Heart right ventricle (tissue), 16 donors: ENCODE measurements at regions of chr11 and their contacts with region 1.

Region 1: DNA sequence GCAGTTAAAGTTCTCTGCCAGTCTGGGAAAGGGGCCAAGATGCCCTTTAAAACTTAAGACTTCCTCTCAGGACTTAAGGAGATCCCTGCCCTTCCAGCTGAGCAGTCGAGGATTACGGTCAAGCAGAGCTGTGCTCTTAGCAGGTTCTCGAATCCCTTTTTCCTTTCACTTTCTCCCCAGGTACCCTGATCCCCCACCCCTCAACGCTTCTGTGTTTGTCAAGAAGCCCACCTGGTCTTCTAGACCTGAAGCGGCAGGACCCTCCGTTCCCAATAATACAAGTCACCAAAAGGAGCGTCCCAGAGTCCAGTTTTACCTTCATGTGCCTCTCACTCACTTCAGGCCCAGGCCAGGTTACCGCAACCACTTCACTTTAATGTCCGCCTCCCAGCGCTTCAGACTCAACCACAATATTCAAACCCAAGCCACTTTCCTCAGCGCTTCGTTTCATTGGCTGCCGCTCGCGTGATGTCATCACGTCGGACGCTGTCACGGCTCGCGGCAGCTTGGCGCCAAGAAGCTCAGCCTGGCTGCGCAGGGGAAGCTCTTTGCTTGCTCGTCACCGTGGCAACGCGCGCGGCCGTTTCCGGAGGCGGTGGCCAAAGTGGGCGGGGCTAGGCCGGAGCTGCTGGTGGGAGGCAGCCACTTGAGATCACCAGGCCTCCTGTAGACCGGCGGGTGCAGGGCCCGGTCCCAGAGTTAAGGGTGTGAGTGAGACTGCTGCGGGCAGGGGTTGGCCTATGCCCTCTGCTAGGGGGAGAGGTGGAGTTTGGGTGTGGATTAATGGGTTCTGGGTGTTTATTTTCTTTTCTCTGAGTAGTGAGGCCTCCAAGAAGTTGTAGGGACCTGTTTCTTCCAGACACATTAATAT is at the starts of genes KIF18A and METTL15:
- DNase-seq: peak; percentile 100
- ATAC-seq: peak; percentile 99 to 100 (median 100)
- H3K4me3 ChIP-seq: peak within 1 kb of the TSS; percentile 36 to 74 (median 59)
- H3K27ac ChIP-seq: peak within 1 kb of the TSS in 9 of 10 donors; percentile 63 to 91 (median 80)
- H3K4me1 ChIP-seq: peaks cover 0 to 45% (median 37%) of the 10 kb centered on the region in 9 donors
- H3K27me3 ChIP-seq: no peaks in the 10 kb centered on the region
- CTCF ChIP-seq: no peak
- total RNA-seq, gene KIF18A: 0.06 to 1.3 (median 0.17) TPM in 9 of 10 donors, not detected in the other
- total RNA-seq, gene METTL15: 8.9 to 13.6 (median 11.9) TPM

Region 2: DNA sequence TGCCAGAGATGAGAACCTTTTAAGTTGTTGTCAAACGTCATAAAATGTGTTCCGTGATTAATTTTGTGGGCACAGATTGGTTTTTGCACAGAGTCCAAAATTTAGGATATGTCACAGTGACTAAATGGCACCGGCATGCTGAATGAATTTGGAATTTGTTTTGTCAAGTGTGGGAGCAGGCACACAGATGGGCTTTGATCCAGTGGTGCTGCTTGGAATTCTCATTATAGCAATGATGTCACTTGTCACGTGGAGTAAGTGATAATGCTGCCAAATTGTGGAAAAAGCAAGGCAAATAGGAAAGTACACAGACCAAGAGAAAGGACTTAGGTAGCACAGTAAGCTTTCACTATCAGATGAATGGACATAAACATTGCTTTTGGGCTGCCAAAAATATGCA is 593.4 kb before region 1 on chr11:
- intact Hi-C with region 1: loop called in 1 of 10 experiments (anchors 10 kb)
- DNase-seq: peak in 1 of 2 donors; percentile 60
- ATAC-seq: peak; percentile 76 to 91 (median 90)
- H3K4me3 ChIP-seq: no peak overlapping the region
- H3K27ac ChIP-seq: peak overlapping the region; percentile 50 to 80 (median 69)
- H3K4me1 ChIP-seq: peaks cover 0 to 44% (median 10%) of the 10 kb centered on the region in 9 donors
- H3K27me3 ChIP-seq: no peaks in the 10 kb centered on the region
- CTCF ChIP-seq: no peak

Region 3: GRCh38 chr11:27705873-27706820 is 401.8 kb before region 1 on chr11:
- intact Hi-C with region 1: loop called in 2 of 10 experiments (anchors 5 to 10 kb)
- DNase-seq: no peak
- ATAC-seq: no peak
- H3K4me3 ChIP-seq: no peak overlapping the region
- H3K27ac ChIP-seq: no peak overlapping the region
- H3K4me1 ChIP-seq: peaks cover 0 to 9% (median 7%) of the 10 kb centered on the region in 9 donors
- H3K27me3 ChIP-seq: peaks cover 0 to 46% (median 24%) of the 10 kb centered on the region in 7 donors
- CTCF ChIP-seq: peak; percentile 31 to 72 (median 60)

Region 4: GRCh38 chr11:27874998-27875830 is 232.8 kb before region 1 on chr11:
- intact Hi-C with region 1: loop called in 1 of 10 experiments (anchors 10 kb)
- DNase-seq: no peak
- ATAC-seq: peak in 4 of 8 donors; percentile 34 to 59 (median 40)
- H3K4me3 ChIP-seq: no peak overlapping the region
- H3K27ac ChIP-seq: no peak overlapping the region
- H3K4me1 ChIP-seq: peaks cover 0 to 11% (median 0%) of the 10 kb centered on the region in 9 donors
- H3K27me3 ChIP-seq: no peaks in the 10 kb centered on the region
- CTCF ChIP-seq: no peak

Region 5: GRCh38 chr11:28146123-28146751 is 38.3 kb after region 1 on chr11:
- intact Hi-C with region 1: no loop called
- DNase-seq: no peak
- ATAC-seq: peak in 1 of 8 donors; percentile 50
- H3K4me3 ChIP-seq: no peak overlapping the region
- H3K27ac ChIP-seq: no peak overlapping the region
- H3K4me1 ChIP-seq: peaks cover 0 to 4% (median 0%) of the 10 kb centered on the region in 9 donors
- H3K27me3 ChIP-seq: no peaks in the 10 kb centered on the region
- CTCF ChIP-seq: no peak